Activated CD4-positive, alpha-beta T cell treated with anti-CD3 and anti-CD28 coated beads for 36 hours (primary cell): ENCODE measurements at regions of chr2 and their contacts with region 1.

Region 1: DNA sequence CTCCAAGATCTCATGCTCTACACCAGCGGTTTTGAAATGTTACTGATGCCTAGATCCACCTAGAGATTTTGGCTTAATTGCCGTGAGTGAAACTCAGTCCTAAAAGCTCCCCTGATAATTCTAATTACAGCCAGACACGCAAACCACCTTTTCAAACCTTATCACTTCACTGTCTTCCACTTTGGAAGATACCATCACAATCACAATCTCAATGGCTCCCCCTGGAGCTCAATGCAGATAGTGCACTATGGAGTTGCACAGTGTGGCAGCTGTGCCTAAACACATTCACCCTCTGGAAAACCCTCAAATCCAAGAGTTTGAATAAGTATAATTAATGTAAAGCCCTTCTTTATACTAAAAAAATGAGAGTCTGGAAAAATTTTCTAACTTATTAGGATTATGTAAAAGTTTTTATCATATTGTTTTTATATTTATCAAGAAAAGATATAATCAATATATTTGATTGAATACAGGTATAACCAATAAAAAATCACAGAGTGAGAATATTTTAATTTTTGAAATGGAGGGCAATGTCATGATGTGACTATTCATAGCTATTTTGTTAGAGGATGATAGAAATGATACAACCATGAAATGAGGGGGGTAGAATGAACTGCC is 102.9 kb upstream of the SLC8A1 start:
- DNase-seq: peak; percentile 75
- ATAC-seq: peak; percentile 76
- H3K4me3 Mint-ChIP-seq: no peak overlapping the region
- H3K27ac Mint-ChIP-seq: no peak overlapping the region
- H3K4me1 Mint-ChIP-seq: no peaks in the 10 kb centered on the region
- H3K27me3 Mint-ChIP-seq: peaks cover 2% of the 10 kb centered on the region

Region 2: DNA sequence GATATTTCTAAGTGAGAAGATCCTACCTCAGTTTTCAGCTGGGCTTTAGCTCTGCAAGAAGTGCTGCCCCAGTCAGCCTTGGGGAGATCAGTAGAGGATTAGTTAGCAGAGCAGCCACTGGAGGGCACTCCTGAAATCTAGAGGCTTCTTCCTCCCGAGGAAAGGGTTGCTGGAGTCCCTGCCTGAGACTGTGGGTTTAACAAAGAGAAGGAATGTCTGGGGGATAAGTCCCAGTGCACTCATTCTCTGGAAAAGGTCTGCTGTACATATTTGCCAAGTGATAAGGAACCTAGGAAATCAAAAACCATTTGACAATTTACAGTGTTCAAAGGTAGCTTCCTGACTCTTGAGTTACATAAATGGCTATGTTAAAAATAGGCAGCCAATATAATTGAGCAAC is 310.1 kb before region 1 on chr2:
- CTCF ChIA-PET with region 1: no interaction called
- POLR2A ChIA-PET with region 1: no interaction called
- intact Hi-C with region 1: loop called in 1 of 2 experiments (anchors 10 kb)
- DNase-seq: peak; percentile 41
- ATAC-seq: peak; percentile 36
- H3K4me3 Mint-ChIP-seq: no peak overlapping the region
- H3K27ac Mint-ChIP-seq: no peak overlapping the region
- H3K4me1 Mint-ChIP-seq: no peaks in the 10 kb centered on the region
- H3K27me3 Mint-ChIP-seq: peaks cover 4% of the 10 kb centered on the region

Region 3: GRCh38 chr2:40339026-40339425 is 215.8 kb before region 1 on chr2:
- CTCF ChIA-PET with region 1: interaction called, 3 read pairs
- POLR2A ChIA-PET with region 1: no interaction called
- intact Hi-C with region 1: loop called in 1 of 2 experiments (anchors 5 kb)
- DNase-seq: no peak
- ATAC-seq: no peak
- H3K4me3 Mint-ChIP-seq: no peak overlapping the region
- H3K27ac Mint-ChIP-seq: no peak overlapping the region
- H3K4me1 Mint-ChIP-seq: no peaks in the 10 kb centered on the region
- H3K27me3 Mint-ChIP-seq: no peaks in the 10 kb centered on the region

Region 4: GRCh38 chr2:40448468-40449079 is 106.2 kb before region 1 on chr2:
- CTCF ChIA-PET with region 1: interaction called, 7 read pairs
- POLR2A ChIA-PET with region 1: no interaction called
- intact Hi-C with region 1: loop called (anchors 1 to 5 kb)
- DNase-seq: peak; percentile 31
- ATAC-seq: no peak
- H3K4me3 Mint-ChIP-seq: no peak overlapping the region
- H3K27ac Mint-ChIP-seq: no peak overlapping the region
- H3K4me1 Mint-ChIP-seq: peaks cover 22% of the 10 kb centered on the region
- H3K27me3 Mint-ChIP-seq: peaks cover 39% of the 10 kb centered on the region

Region 5: GRCh38 chr2:40499437-40499836 is 55.3 kb before region 1 on chr2:
- CTCF ChIA-PET with region 1: no interaction called
- POLR2A ChIA-PET with region 1: no interaction called
- intact Hi-C with region 1: no loop called
- DNase-seq: no peak
- ATAC-seq: no peak
- H3K4me3 Mint-ChIP-seq: no peak overlapping the region
- H3K27ac Mint-ChIP-seq: no peak overlapping the region
- H3K4me1 Mint-ChIP-seq: no peaks in the 10 kb centered on the region
- H3K27me3 Mint-ChIP-seq: peaks cover 2% of the 10 kb centered on the region

Region 6: GRCh38 chr2:40773291-40773690 is 218.5 kb after region 1 on chr2:
- CTCF ChIA-PET with region 1: no interaction called
- POLR2A ChIA-PET with region 1: no interaction called
- intact Hi-C with region 1: no loop called
- DNase-seq: no peak
- ATAC-seq: no peak
- H3K4me3 Mint-ChIP-seq: no peak overlapping the region
- H3K27ac Mint-ChIP-seq: no peak overlapping the region
- H3K4me1 Mint-ChIP-seq: no peaks in the 10 kb centered on the region
- H3K27me3 Mint-ChIP-seq: no peaks in the 10 kb centered on the region